GM10248 (cell line): ENCODE measurements at regions of chr9 and their contacts with region 1.

Region 1: GRCh38 chr9:85414390-85414789 is 327.4 kb downstream of the AGTPBP1 start:
- DNase-seq: no peak
- CTCF ChIP-seq: no peak

Region 2: DNA sequence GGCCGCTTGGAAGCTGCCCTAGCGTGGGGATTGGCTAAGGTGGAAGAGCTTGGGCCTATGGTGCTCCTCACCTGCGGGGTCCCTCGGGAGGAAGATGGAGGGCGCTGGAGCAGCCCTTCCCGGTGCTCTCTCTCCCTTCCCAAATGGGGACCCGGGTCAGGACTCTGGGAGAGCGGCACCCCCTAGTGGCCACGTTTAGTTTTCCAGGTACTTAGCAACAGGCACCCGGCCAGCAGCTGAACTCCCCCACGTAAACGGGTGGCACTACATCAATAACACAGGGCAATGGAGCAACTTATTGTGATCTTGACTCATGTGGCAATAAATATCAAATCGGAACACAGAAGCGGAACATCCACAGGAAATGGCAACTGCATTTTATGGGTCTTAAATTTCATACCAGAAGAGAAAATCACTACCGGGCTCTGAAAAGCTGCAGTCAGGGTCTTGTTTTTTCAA is 10.8 kb after region 1 on chr9:
- CTCF ChIA-PET with region 1: interaction called, 18 read pairs
- POLR2A ChIA-PET with region 1: no interaction called
- DNase-seq: peak; percentile 73
- CTCF ChIP-seq: peak; percentile 66